ENCODE measurements at regions of chr17 and their contacts with region 1.

Region 1: DNA sequence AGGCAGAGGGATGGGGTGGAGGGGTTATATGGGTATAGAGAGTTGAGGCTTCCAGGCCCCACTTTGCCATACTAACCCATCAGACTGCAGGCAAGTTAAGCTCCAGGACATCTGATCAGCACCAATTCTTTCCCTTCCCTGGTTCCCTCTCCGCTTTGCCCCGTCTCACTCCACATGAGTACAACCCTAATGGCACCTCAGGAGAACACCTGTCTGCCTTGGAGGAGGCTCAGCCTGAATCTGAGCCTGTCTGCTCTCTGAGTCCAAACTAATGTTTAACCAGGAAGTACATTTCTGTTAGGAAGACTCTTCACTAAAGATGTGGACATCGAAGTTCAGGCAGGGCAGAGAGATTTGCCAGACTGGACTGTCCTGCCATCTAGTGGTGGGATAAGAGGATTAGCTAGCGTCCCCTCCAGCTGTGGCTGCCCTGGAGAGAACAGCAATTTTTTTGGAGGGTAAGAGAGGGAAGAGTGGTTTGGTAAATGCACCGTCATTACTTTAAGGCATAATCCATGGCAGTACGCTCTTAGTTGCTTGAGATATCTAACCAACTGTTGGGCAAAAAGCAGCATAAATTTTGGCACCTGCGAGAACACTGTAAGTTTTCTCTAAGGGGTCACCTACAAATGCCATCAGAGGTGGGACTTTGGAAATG is 29.2 kb upstream of the LRRC75A start:
- DNase-seq: peak; percentile 65 to 68
- ATAC-seq: peak; percentile 91 to 98 (median 94)
- H3K4me3 ChIP-seq: no peak overlapping the region
- H3K27ac ChIP-seq: no peak overlapping the region
- H3K4me1 ChIP-seq: peaks cover 8% of the 10 kb centered on the region
- H3K27me3 ChIP-seq: peaks cover 0 to 20% (median 0%) of the 10 kb centered on the region in 3 donors
- CTCF ChIP-seq: peak; percentile 92

Region 2: GRCh38 chr17:16453493-16453851 is 67.7 kb before region 1 on chr17:
- intact Hi-C with region 1: loop called (anchors 1 to 2 kb)
- DNase-seq: no peak
- ATAC-seq: no peak
- H3K4me3 ChIP-seq: no peak overlapping the region
- H3K27ac ChIP-seq: no peak overlapping the region
- H3K4me1 ChIP-seq: no peaks in the 10 kb centered on the region
- H3K27me3 ChIP-seq: no peaks in the 10 kb centered on the region
- CTCF ChIP-seq: no peak

Region 3: GRCh38 chr17:16623282-16623681 is 102.1 kb after region 1 on chr17:
- intact Hi-C with region 1: no loop called
- DNase-seq: no peak
- ATAC-seq: no peak
- H3K4me3 ChIP-seq: no peak overlapping the region
- H3K27ac ChIP-seq: no peak overlapping the region
- H3K4me1 ChIP-seq: no peaks in the 10 kb centered on the region
- H3K27me3 ChIP-seq: no peaks in the 10 kb centered on the region
- CTCF ChIP-seq: no peak

Measured in psoas muscle (tissue), 8 donors.